Right cardiac atrium (tissue), 5 donors: ENCODE measurements at regions of chr6 and their contacts with region 1.

Region 1: DNA sequence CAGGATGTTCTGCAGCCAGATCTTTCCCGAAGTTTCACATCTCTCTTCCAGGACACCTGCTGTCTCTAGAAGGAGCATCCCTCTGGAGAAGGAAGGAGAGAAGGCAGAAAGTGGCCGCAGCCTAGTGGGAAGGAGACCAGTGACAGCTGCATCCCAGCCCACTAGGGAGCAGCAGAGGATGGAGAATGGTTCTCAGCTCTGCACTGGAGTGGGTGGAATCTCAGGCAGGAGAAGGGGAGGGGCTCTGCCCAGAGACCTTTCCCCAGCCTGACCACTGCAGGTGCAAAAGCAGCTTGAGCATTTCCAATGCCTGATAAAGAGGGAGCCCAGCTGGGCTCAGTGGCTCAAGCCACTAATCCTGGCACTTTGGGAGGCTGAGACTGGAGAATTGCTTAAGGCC is 32.3 kb downstream of the NCR2 start:
- DNase-seq: peak in 2 of 3 donors; percentile 61 to 70
- ATAC-seq: peak; percentile 71 to 78
- H3K4me3 ChIP-seq: no peak overlapping the region
- H3K27ac ChIP-seq: no peak overlapping the region
- H3K4me1 ChIP-seq: peaks cover 5% of the 10 kb centered on the region
- H3K27me3 ChIP-seq: no peaks in the 10 kb centered on the region

Region 2: GRCh38 chr6:41424370-41425058 is 56.8 kb after region 1 on chr6:
- intact Hi-C with region 1: loop called in 2 of 4 experiments (anchors 5 to 10 kb)
- DNase-seq: peak; percentile 79 to 93 (median 87)
- ATAC-seq: peak; percentile 7 to 40
- H3K4me3 ChIP-seq: no peak overlapping the region
- H3K27ac ChIP-seq: no peak overlapping the region
- H3K4me1 ChIP-seq: peaks cover 1% of the 10 kb centered on the region
- H3K27me3 ChIP-seq: no peaks in the 10 kb centered on the region

Region 3: DNA sequence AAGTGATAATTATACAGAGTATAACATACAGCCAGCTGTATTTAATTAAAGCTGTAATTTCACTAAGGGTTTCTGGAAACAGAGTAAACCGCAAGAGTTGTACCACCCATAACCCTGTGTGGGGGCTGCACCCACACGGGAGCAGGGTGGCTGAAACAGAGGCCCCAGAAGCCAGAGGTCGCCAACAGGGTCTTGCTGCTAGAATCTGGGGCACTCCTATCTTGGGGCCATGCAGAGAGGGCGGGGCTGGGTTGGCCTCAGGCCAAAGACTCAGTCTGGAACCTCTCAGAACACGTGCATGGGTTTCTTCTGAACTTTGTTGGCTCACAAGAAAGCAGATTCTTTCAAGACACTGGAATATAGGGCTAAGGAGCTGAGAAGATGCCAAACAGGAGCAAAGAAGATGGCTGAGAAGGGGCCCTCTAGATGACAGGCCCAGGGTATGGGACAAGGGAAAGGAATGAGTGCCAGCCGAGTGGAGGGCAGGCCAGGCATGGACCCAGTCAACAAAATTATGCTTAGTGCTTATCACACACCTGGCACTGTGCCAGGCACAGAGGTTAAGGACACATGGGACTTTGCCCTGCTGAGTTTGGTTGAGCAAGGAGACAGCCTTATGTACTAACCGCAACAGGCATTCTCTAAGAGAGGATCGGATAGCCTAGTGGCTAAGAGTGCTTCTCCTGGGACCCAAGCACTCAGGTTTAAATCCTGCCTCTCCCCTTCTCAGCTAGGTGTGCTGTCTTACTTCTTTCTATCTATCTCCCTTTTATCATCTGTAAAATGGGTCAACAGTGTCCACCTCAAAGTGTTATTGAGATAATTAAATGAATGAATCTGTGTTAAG is 81.9 kb after region 1 on chr6:
- intact Hi-C with region 1: loop called in 1 of 4 experiments (anchors 10 kb)
- DNase-seq: peak; percentile 54 to 80 (median 73)
- ATAC-seq: peak; percentile 30 to 43
- H3K4me3 ChIP-seq: no peak overlapping the region
- H3K27ac ChIP-seq: no peak overlapping the region
- H3K4me1 ChIP-seq: peaks cover 12% of the 10 kb centered on the region
- H3K27me3 ChIP-seq: no peaks in the 10 kb centered on the region

Region 4: GRCh38 chr6:41591859-41592502 is 224.3 kb after region 1 on chr6:
- intact Hi-C with region 1: loop called (anchors 5 to 10 kb)
- DNase-seq: peak; percentile 56 to 87 (median 82)
- ATAC-seq: peak; percentile 61 to 73
- H3K4me3 ChIP-seq: no peak overlapping the region
- H3K27ac ChIP-seq: no peak overlapping the region
- H3K4me1 ChIP-seq: no peaks in the 10 kb centered on the region
- H3K27me3 ChIP-seq: no peaks in the 10 kb centered on the region

Region 5: DNA sequence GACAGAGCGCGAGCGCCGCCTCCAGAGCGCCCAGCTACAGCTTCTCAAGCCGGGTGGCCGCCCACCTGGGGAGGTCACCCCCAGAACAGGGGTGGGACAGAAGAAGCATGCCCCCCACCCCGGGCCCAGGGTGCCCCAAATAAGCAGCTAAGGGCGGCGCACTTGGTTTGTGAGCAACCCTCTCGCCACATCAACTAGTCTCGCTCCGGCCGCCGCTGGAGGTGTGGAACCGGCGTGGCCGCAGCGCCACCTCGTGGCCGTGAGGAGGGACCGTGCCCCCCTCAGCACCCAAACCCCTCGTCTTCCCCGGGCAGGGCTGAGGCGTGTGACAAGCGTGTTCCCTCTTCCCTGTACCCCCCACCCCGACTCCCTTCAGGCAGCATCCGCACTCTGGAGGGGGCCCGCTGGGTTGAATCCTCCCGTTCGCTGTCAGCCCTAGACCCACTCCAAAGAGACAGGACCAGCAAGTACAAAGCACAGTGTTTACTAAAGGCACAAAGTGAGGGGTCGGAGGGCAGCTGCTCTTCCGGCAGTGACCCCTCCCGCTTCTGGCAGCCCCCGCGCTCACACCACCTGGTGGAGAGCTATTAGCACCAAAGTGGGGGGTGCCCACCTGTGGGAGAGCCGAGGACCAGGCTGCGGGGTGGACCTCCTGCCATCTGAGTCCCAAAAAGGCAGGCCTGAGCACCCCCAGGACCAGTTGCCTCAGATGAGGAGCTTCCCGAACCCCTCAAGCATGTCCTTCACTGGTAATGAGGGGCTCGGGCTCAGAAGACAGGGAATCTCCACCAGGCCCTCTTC is 316.0 kb after region 1 on chr6:
- intact Hi-C with region 1: loop called (anchors 2 to 5 kb)
- DNase-seq: peak; percentile 84 to 95 (median 94)
- ATAC-seq: peak; percentile 84
- H3K4me3 ChIP-seq: peak overlapping the region; percentile 39
- H3K27ac ChIP-seq: peak overlapping the region; percentile 53
- H3K4me1 ChIP-seq: no peaks in the 10 kb centered on the region
- H3K27me3 ChIP-seq: no peaks in the 10 kb centered on the region

Region 6: DNA sequence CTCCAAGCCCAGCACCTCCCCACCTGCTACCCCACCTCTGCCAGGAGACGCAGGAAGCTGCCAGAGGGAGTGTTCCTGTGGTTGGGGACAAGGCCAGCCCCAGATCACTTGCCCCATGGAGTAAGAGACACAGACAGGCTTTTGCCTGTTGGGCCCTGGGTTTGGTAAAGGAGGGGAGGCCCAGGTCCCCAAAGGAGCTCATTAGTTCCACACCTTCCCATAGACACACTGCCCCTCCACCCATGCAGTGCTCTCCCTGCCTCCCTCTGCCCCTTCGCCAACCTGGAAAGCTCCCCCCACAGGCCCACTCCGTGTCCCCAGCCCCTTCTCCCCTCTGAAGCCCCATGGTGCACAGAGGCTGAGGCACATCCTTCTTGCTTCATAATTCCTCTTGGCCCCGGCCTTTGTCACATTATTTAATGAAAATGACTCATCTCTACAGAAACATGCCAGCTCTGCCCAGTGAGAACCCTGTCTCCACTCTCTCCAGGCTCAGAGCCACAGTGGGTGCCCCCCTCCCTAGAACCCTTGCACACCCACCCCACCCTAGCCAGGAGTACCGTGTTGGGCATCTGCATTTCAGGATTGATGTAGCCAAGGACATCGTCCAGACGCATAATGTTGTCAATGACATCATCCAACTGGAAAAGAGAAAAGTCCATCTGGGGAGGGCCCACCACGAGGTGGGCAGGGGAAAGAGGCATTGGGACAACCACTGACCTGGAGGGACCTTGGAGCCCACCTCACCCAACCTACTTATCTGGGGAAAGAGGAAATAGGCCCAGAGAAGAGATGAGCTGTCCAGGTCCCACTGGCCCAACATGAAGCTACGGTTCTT is 321.7 kb after region 1 on chr6:
- intact Hi-C with region 1: loop called in 2 of 4 experiments (anchors 5 kb)
- DNase-seq: peak in 1 of 3 donors; percentile 9
- ATAC-seq: no peak
- H3K4me3 ChIP-seq: no peak overlapping the region
- H3K27ac ChIP-seq: no peak overlapping the region
- H3K4me1 ChIP-seq: peaks cover 3% of the 10 kb centered on the region
- H3K27me3 ChIP-seq: no peaks in the 10 kb centered on the region

Region 7: GRCh38 chr6:41779793-41780545 is 412.3 kb after region 1 on chr6 and contains the start of gene FRS3:
- intact Hi-C with region 1: loop called in 1 of 4 experiments (anchors 10 kb)
- DNase-seq: peak; percentile 98 to 100 (median 99)
- ATAC-seq: peak; percentile 90 to 94
- H3K4me3 ChIP-seq: peak within 1 kb of the TSS; percentile 80
- H3K27ac ChIP-seq: peak within 1 kb of the TSS; percentile 87
- H3K4me1 ChIP-seq: no peaks in the 10 kb centered on the region
- H3K27me3 ChIP-seq: no peaks in the 10 kb centered on the region
- total RNA-seq, gene FRS3: 3.7 to 6.9 (median 4.8) TPM